ENCODE measurements at regions of chr2 and their contacts with region 1.

Region 1: DNA sequence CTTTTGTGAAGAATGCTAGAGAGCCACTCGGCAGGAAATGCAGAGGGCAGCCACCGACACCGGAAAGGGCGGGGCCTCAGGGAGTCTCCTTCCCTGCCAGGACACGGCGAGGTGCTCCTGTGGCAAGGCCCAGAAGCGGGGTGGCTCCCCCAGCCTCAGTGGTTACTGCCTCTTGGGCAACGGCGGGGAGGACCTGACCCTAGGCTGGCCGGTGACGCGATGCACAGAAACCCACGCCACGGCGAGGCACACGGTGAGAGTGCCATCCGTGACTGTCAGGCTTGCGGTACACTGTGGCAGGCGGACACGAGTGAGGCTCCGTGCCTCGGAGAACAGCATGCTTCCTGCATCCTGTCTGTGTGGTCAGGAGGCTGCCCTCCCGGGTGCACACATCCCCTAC is 47.8 kb downstream of the ZAP70 start:
- DNase-seq: no peak
- H3K4me3 ChIP-seq: no peak overlapping the region
- H3K27ac ChIP-seq: no peak overlapping the region
- H3K4me1 ChIP-seq: no peaks in the 10 kb centered on the region
- H3K27me3 ChIP-seq: no peaks in the 10 kb centered on the region
- CTCF ChIP-seq: no peak
- POLR2A ChIP-seq: no peak

Region 2: DNA sequence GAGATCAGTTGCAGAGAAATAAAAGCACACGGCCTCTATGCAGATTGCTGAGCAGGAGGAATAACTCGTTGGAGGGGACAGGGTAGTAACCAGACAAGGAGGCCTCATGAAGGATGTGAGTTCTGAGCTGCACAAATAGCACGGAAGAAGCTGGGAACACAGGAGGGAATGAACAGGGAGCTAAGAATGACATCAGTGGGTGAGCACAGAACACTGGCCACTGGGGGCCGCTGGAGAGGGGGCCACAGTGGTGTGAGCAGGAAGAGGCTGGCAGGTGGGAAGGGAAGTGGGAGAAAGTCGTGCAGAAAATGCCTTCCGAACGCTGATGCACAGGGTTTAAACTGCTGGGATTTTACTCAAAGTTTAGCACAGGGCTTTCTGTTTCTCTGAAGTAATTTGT is 13.2 kb after region 1 on chr2:
- CTCF ChIA-PET with region 1: interaction called, 10 read pairs
- POLR2A ChIA-PET with region 1: no interaction called
- dilution Hi-C with region 1: no loop called
- intact Hi-C with region 1: no loop called
- DNase-seq: peak; percentile 12
- H3K4me3 ChIP-seq: no peak overlapping the region
- H3K27ac ChIP-seq: no peak overlapping the region
- H3K4me1 ChIP-seq: no peaks in the 10 kb centered on the region
- H3K27me3 ChIP-seq: no peaks in the 10 kb centered on the region
- CTCF ChIP-seq: peak; percentile 47 to 69
- POLR2A ChIP-seq: no peak

Region 3: GRCh38 chr2:98157557-98157956 is 396.4 kb after region 1 on chr2:
- CTCF ChIA-PET with region 1: no interaction called
- POLR2A ChIA-PET with region 1: no interaction called
- dilution Hi-C with region 1: no loop called
- intact Hi-C with region 1: no loop called
- DNase-seq: no peak
- H3K4me3 ChIP-seq: no peak overlapping the region
- H3K27ac ChIP-seq: no peak overlapping the region
- H3K4me1 ChIP-seq: no peaks in the 10 kb centered on the region
- H3K27me3 ChIP-seq: peaks cover 1 to 2% of the 10 kb centered on the region in 2 experiments
- CTCF ChIP-seq: no peak
- POLR2A ChIP-seq: no peak